ENCODE measurements at regions of chr15 and their contacts with region 1.

Region 1: GRCh38 chr15:66293419-66294156 is at the start of gene DIS3L:
- DNase-seq: peak; percentile 87
- H3K4me3 ChIP-seq: peak within 1 kb of the TSS; percentile 69
- H3K27ac ChIP-seq: peak within 1 kb of the TSS; percentile 88
- H3K4me1 ChIP-seq: peaks cover 44% of the 10 kb centered on the region
- CTCF ChIP-seq: no peak
- total RNA-seq, gene DIS3L: 33.9 and 41.2 TPM in 2 replicates

Region 2: GRCh38 chr15:65610871-65611718 is 682.5 kb before region 1 on chr15 and contains the start of gene INTS14:
- CTCF ChIA-PET with region 1: no interaction called
- POLR2A ChIA-PET with region 1: no interaction called
- intact Hi-C with region 1: loop called (anchors 5 kb)
- DNase-seq: peak; percentile 97
- H3K4me3 ChIP-seq: peak within 1 kb of the TSS; percentile 72
- H3K27ac ChIP-seq: peak within 1 kb of the TSS; percentile 41
- H3K4me1 ChIP-seq: peaks cover 30% of the 10 kb centered on the region
- CTCF ChIP-seq: peak; percentile 74
- total RNA-seq, gene INTS14: 28.1 and 46.7 TPM in 2 replicates

Region 3: GRCh38 chr15:65869127-65869953 is 424.2 kb before region 1 on chr15 and contains the start of gene RAB11A:
- CTCF ChIA-PET with region 1: no interaction called
- POLR2A ChIA-PET with region 1: interaction called, 3 read pairs
- intact Hi-C with region 1: loop called (anchors 5 kb)
- DNase-seq: peak; percentile 98
- H3K4me3 ChIP-seq: peak within 1 kb of the TSS; percentile 94
- H3K27ac ChIP-seq: peak within 1 kb of the TSS; percentile 83
- H3K4me1 ChIP-seq: peaks cover 18% of the 10 kb centered on the region
- CTCF ChIP-seq: peak; percentile 68
- total RNA-seq, gene RAB11A: 116 and 130 TPM in 2 replicates

Region 4: DNA sequence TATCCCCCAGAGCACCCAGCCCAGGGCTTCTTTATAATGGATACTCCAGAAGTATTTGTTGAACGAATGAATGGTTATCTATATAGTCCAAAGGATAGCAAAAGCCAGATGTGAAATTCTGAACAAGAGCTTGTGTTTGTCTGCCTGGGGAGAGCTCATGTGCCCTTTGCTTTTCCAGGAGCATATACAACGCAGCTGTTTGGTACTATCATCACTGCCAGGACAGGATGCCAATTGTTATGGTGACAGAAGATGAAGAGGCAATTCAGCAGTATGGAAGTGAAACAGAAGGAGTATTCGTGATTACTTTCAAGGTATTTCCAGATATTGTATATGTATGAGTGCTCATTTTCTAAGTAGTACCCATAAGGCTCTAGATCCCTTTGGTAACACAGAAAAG is 14.9 kb after region 1 on chr15:
- CTCF ChIA-PET with region 1: no interaction called
- POLR2A ChIA-PET with region 1: no interaction called
- intact Hi-C with region 1: no loop called
- DNase-seq: no peak
- H3K4me3 ChIP-seq: no peak overlapping the region
- H3K27ac ChIP-seq: no peak overlapping the region
- H3K4me1 ChIP-seq: no peaks in the 10 kb centered on the region
- CTCF ChIP-seq: no peak

Region 5: DNA sequence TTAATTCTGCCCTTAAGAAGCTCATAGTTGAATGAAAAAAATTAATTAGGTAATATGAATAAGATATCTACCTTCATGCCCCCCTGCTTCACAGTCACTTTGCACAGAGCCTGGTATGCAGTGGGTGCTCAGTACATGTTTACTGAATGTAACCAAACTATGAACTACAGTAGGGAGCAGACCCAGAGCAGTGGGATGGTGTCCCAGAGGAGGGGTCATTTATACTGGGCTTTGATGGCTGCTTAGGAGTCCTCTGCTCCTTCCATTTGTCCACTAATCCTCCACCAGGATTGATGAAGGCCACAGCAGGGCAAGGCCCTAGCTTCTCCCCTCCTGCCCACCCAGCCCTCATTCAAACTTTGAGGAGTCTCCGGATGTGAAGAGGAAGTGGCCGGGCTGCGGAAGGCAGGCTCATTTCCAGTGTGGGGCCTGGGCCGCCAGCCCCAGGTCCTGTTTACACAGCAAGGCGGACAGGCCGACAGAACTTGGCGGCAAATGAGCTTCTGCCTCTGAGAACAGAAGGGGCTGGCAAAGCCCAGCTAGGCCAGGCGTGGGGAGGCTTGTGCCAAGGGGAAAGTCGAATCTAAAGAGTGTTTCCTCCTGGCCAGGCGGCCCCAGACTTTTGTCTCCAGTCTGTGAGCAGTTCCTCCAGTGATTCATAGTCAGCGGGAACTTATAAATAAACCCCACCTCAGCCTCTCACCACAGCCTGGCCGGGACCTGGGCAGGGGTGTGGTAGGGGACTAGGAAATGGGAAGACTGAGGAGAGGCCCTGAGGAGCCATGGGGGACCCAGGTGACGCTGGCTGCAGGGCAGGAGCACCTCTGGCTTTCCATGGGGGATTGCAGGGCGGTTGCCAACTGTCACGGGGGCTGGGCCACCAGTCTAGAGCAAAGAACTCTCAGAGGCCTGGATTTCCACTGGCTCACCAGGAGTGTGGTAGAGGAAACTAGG is 323.8 kb after region 1 on chr15:
- CTCF ChIA-PET with region 1: no interaction called
- POLR2A ChIA-PET with region 1: no interaction called
- intact Hi-C with region 1: no loop called
- DNase-seq: no peak
- H3K4me3 ChIP-seq: no peak overlapping the region
- H3K27ac ChIP-seq: no peak overlapping the region
- H3K4me1 ChIP-seq: no peaks in the 10 kb centered on the region
- CTCF ChIP-seq: no peak

Region 6: GRCh38 chr15:67146875-67147381 is 853.3 kb after region 1 on chr15:
- CTCF ChIA-PET with region 1: no interaction called
- POLR2A ChIA-PET with region 1: no interaction called
- intact Hi-C with region 1: no loop called
- DNase-seq: no peak
- H3K4me3 ChIP-seq: no peak overlapping the region
- H3K27ac ChIP-seq: no peak overlapping the region
- H3K4me1 ChIP-seq: peaks cover 73% of the 10 kb centered on the region
- CTCF ChIP-seq: no peak